Upper lobe of right lung (tissue), 1 donor: ENCODE measurements at regions of chr12 and their contacts with region 1.

Region 1: DNA sequence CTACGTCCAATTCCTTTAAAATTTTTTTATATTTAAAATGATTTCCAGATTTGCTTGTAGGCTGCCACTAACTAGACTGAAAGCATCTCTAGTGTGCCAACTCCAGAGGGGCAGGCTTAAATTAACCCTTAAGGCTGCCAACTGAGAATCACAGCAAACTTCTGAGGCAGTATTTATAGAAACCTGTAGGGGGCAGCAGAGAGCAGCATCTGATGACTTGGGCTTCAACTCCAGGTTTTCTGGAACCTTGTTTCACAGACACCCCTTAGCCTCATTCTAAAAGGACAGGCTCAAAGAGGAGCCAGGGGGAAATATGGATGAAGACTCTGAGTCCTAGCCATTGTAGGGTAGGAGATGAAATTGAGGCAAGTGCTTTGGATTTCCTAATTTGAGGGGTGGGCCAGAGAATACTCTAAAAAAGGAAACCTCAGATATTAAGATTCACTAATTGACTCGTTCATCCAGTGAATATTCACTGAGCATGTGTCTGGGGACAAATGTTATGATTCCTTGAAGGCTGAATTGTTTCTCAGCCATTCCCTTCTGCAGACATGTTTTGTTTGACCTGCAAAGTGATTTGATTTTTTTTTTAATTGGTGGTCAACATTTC is 63.3 kb upstream of the HSPB8 start:
- DNase-seq: no peak
- ATAC-seq: peak; percentile 81
- H3K4me3 ChIP-seq: no peak overlapping the region
- H3K27ac ChIP-seq: no peak overlapping the region
- H3K4me1 ChIP-seq: no peaks in the 10 kb centered on the region
- H3K27me3 ChIP-seq: no peaks in the 10 kb centered on the region
- CTCF ChIP-seq: peak; percentile 92

Region 2: GRCh38 chr12:119412811-119413794 is 297.7 kb after region 1 on chr12:
- intact Hi-C with region 1: loop called (anchors 5 kb)
- DNase-seq: no peak
- ATAC-seq: peak; percentile 74
- H3K4me3 ChIP-seq: no peak overlapping the region
- H3K27ac ChIP-seq: no peak overlapping the region
- H3K4me1 ChIP-seq: peaks cover 12% of the 10 kb centered on the region
- H3K27me3 ChIP-seq: no peaks in the 10 kb centered on the region
- CTCF ChIP-seq: peak; percentile 89